Activated T-helper 2 cell treated with anti-CD3 and anti-CD28 coated beads, Interferon-gamma antibody, Interleukin-2, Interleukin-4, amounts not matched to agents 10 μg/mL and 5 μg/mL and 100 μg/mL, durations not matched to agents 14 hours and 24 hours and 36 hours (primary cell): ENCODE measurements at regions of chr6 and their contacts with region 1.

Region 1: GRCh38 chr6:42745707-42746462 is at the start of gene TBCC:
- DNase-seq: peak; percentile 92
- H3K4me3 Mint-ChIP-seq: peak within 1 kb of the TSS; percentile 100
- H3K27ac Mint-ChIP-seq: peak within 1 kb of the TSS; percentile 100
- H3K4me1 Mint-ChIP-seq: peaks cover 24% of the 10 kb centered on the region
- H3K27me3 Mint-ChIP-seq: no peaks in the 10 kb centered on the region
- total RNA-seq, gene TBCC: 17.7 and 19.5 TPM in 2 replicates

Region 2: DNA sequence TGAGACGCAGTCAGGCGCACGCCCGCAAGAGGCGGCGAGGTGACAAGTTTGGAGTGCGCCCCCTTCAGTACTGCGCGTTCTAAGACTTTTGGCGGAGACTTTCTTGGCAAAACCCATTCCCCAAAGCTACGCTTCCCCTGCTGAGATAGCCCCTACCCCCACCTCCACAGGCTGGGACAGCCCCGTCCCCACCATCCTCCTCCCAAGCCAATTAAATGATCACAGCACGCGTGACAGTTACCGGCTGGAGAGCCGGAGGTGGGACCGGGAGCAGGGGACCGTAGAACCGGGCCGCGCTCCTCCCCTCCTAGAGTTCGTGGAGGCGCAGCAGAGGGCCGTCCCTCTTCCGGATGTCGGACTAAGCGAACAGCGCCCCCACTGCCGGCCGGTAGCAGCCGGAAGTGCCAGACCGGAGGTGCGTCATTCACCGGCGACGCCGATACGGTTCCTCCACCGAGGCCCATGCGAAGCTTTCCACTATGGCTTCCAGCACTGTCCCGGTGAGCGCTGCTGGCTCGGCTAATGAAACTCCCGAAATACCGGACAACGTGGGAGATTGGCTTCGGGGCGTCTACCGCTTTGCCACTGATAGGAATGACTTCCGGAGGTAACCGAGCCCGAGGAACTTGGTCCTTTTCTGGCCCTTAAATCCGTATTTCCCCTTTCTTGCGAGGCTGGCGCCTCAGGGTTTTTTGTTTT is 958.5 kb before region 1 on chr6 and contains the start of gene TOMM6:
- intact Hi-C with region 1: loop called (anchors 1 kb)
- DNase-seq: peak; percentile 95
- H3K4me3 Mint-ChIP-seq: peak within 1 kb of the TSS; percentile 96
- H3K27ac Mint-ChIP-seq: peak within 1 kb of the TSS; percentile 97
- H3K4me1 Mint-ChIP-seq: peaks cover 15% of the 10 kb centered on the region
- H3K27me3 Mint-ChIP-seq: peaks cover 3% of the 10 kb centered on the region
- total RNA-seq, gene TOMM6: 308 and 316 TPM in 2 replicates

Region 3: DNA sequence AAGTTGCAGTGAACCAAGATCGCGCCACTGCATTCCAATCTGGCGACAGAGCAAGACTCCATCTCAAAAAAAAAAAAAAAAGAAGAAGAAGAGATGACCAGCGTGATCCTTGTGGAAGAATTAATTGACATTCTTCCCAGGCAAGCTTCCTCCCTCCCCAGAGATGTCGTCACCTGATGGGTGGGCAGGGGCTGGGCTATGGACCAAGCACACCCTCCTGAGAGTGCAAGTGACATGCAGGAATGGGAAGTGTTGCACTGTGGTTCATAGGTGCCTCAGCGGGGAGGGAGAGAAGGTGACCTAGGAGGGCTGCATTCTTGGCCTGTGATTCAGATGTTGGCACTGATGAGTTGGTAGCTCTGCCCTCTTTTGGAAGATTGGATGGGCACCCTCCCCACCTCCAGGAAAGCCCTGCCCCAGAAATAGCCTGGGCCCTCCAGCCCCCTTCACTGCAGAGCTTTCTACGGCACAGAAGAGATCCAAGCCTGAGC is 657.7 kb before region 1 on chr6:
- intact Hi-C with region 1: no loop called
- DNase-seq: no peak
- H3K4me3 Mint-ChIP-seq: no peak overlapping the region
- H3K27ac Mint-ChIP-seq: no peak overlapping the region
- H3K4me1 Mint-ChIP-seq: no peaks in the 10 kb centered on the region
- H3K27me3 Mint-ChIP-seq: no peaks in the 10 kb centered on the region

Region 4: DNA sequence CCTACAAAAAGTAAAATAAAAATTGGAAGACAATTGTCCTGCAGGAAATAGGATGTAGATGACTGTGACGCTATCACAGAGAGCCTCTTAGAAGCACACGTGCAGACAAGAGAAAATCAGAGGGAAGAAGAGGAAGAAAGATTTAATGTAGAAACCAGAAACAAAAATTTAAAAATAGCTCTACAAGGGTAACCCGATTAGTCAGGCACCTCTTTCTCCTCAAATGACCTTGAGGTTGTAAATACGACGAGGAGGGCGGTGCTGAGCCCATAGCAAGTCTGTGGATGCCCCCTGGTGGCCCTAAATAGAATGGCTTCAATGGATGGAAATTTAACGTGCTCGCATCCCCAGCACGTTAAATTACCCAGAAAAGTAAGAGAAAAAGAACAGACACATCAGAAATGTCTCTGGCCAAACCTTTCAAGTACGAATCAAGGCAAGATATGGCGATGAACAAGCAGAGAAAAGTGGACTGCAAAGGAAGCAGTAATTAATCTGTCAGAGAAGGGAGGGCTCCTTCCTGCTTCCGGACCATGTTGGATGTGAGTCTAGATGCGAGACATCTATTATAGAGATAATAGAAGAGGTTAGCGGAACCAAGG is 19.3 kb before region 1 on chr6:
- intact Hi-C with region 1: loop called (anchors 1 kb)
- DNase-seq: peak; percentile 61
- H3K4me3 Mint-ChIP-seq: peak overlapping the region; percentile 81
- H3K27ac Mint-ChIP-seq: peak overlapping the region; percentile 98
- H3K4me1 Mint-ChIP-seq: peaks cover 19% of the 10 kb centered on the region
- H3K27me3 Mint-ChIP-seq: peaks cover 6% of the 10 kb centered on the region

Region 5: GRCh38 chr6:42782622-42783176 is 36.8 kb after region 1 on chr6:
- intact Hi-C with region 1: loop called (anchors 1 kb)
- DNase-seq: peak; percentile 61
- H3K4me3 Mint-ChIP-seq: peak overlapping the region; percentile 87
- H3K27ac Mint-ChIP-seq: peak overlapping the region; percentile 99
- H3K4me1 Mint-ChIP-seq: peaks cover 33% of the 10 kb centered on the region
- H3K27me3 Mint-ChIP-seq: no peaks in the 10 kb centered on the region

Region 6: DNA sequence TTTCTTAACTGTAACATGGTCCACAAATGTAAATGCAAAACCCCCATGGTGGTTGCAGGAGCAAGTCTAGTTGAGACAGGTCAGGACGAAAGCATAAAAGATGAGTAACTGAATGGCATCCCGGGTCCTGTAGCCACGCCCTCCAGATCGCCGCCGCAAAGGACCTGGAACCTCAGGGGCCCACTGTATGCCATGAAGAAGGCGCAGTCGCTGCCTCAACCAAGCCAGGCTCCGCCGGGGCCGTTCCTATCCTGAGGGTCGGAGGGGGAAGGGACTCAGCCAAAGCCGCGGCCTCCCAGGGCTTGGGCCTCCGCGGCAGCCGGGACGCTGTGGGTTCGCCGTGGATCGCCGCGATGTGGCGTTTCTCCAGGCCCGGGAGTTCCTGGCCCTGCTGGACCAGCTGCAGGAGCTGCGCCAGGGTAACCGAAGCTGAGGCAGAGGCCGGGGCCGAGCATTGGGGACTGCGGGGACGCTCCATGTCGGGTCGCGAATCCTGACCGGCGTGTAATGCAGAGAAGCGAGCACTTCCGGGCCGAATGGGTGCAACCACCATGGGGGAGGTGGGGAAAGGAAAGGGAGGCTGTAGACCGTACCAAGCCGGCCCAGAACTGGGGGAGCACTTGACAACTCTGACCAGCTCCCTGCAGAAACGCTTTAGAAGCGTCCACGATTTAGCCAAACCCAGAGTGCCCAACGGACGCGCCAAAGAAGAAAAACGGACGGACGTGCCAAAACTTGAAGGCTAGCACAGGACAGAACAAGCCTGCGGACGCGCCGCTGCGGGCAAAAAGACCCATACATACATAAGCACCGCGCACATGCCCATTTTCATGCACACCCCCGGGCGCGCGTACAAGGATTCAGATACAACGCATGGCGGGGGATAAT is 144.7 kb after region 1 on chr6:
- intact Hi-C with region 1: loop called (anchors 1 kb)
- DNase-seq: peak; percentile 88
- H3K4me3 Mint-ChIP-seq: peak overlapping the region; percentile 86
- H3K27ac Mint-ChIP-seq: peak overlapping the region; percentile 96
- H3K4me1 Mint-ChIP-seq: peaks cover 16% of the 10 kb centered on the region
- H3K27me3 Mint-ChIP-seq: no peaks in the 10 kb centered on the region

Region 7: GRCh38 chr6:43013843-43014433 is 268.1 kb after region 1 on chr6 and contains the starts of genes KLHDC3 and MEA1:
- intact Hi-C with region 1: loop called (anchors 1 kb)
- DNase-seq: peak; percentile 99
- H3K4me3 Mint-ChIP-seq: peak within 1 kb of the TSS; percentile 96
- H3K27ac Mint-ChIP-seq: peak within 1 kb of the TSS; percentile 74
- H3K4me1 Mint-ChIP-seq: peaks cover 35% of the 10 kb centered on the region
- H3K27me3 Mint-ChIP-seq: no peaks in the 10 kb centered on the region
- total RNA-seq, gene KLHDC3: 71.2 and 74.6 TPM in 2 replicates
- total RNA-seq, gene MEA1: 90.9 and 91.2 TPM in 2 replicates